Tibial artery (tissue), 4 donors: ENCODE measurements at regions of chr6 and their contacts with region 1.

Region 1: GRCh38 chr6:145734486-145735355 is 599 bp downstream of the EPM2A start:
- DNase-seq: peak; percentile 87 to 93
- H3K4me3 ChIP-seq: peak overlapping the region; percentile 73 to 77
- H3K27ac ChIP-seq: peak overlapping the region; percentile 98
- H3K4me1 ChIP-seq: peaks cover 0 to 51% (median 5%) of the 10 kb centered on the region in 4 donors
- H3K27me3 ChIP-seq: no peaks in the 10 kb centered on the region
- CTCF ChIP-seq: no peak

Region 2: GRCh38 chr6:145241039-145241438 is 493.7 kb before region 1 on chr6:
- intact Hi-C with region 1: no loop called
- DNase-seq: no peak
- H3K4me3 ChIP-seq: no peak overlapping the region
- H3K27ac ChIP-seq: no peak overlapping the region
- H3K4me1 ChIP-seq: no peaks in the 10 kb centered on the region
- H3K27me3 ChIP-seq: no peaks in the 10 kb centered on the region
- CTCF ChIP-seq: no peak

Region 3: GRCh38 chr6:145360859-145361258 is 373.9 kb before region 1 on chr6:
- intact Hi-C with region 1: no loop called
- DNase-seq: no peak
- H3K4me3 ChIP-seq: no peak overlapping the region
- H3K27ac ChIP-seq: no peak overlapping the region
- H3K4me1 ChIP-seq: no peaks in the 10 kb centered on the region
- H3K27me3 ChIP-seq: no peaks in the 10 kb centered on the region
- CTCF ChIP-seq: no peak

Region 4: GRCh38 chr6:145602726-145603326 is 131.9 kb before region 1 on chr6:
- intact Hi-C with region 1: no loop called
- DNase-seq: no peak
- H3K4me3 ChIP-seq: no peak overlapping the region
- H3K27ac ChIP-seq: no peak overlapping the region
- H3K4me1 ChIP-seq: peaks cover 0 to 7% (median 0%) of the 10 kb centered on the region in 4 donors
- H3K27me3 ChIP-seq: no peaks in the 10 kb centered on the region
- CTCF ChIP-seq: no peak

Region 5: GRCh38 chr6:145756146-145756662 is 21.5 kb after region 1 on chr6:
- intact Hi-C with region 1: no loop called
- DNase-seq: peak; percentile 37 to 70
- H3K4me3 ChIP-seq: no peak overlapping the region
- H3K27ac ChIP-seq: no peak overlapping the region
- H3K4me1 ChIP-seq: peaks cover 0 to 7% (median 0%) of the 10 kb centered on the region in 4 donors
- H3K27me3 ChIP-seq: no peaks in the 10 kb centered on the region
- CTCF ChIP-seq: no peak

Region 6: DNA sequence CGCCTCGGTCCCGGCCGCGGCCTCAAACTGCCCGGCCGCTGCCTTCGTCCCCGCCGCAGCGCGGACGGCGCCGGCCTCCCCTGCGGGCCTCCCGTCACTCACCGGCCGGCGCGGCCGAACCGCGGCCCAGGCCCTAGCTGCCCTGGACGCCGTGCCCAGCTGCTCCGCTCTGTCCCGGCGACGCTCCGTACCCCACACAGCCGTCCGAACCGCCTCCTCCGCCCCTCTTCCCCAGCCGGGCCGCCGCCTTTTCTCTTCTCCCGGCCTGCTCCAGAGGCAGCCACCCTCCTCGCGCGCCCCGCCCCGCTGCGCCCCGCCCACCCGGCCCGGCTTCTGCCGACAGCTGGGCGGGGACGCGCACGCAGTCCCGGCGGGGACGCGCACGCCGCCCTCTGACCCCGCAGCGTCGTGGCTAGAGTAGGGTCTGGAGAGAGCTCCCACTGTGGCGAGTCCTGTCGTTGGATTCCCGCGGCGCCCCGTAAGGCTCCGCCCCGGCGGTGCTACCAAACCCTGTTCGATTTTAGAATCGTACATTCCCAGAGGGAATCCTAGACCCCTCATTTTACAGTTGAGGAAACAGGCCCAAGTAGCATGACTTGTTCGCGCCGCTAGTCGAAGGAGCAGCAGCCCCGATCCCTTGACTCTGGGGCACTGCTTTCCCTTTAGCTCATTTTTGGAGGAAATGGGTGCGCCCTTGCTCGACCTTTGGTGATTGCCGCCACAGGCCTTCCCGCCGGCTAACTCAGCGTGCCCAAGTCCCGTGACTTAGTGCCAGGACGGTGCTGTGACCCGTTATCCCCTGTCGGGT is 80.0 kb after region 1 on chr6 and contains the start of gene FBXO30:
- intact Hi-C with region 1: loop called (anchors 2 kb)
- DNase-seq: peak; percentile 84 to 93
- H3K4me3 ChIP-seq: peak within 1 kb of the TSS; percentile 72 to 73
- H3K27ac ChIP-seq: peak within 1 kb of the TSS; percentile 94 to 96
- H3K4me1 ChIP-seq: peaks cover 0 to 46% (median 21%) of the 10 kb centered on the region in 4 donors
- H3K27me3 ChIP-seq: no peaks in the 10 kb centered on the region
- CTCF ChIP-seq: peak; percentile 20 to 58

Region 7: GRCh38 chr6:145963216-145964068 is 228.7 kb after region 1 on chr6:
- intact Hi-C with region 1: loop called (anchors 10 kb)
- DNase-seq: peak; percentile 37 to 76
- H3K4me3 ChIP-seq: peak overlapping the region; percentile 81 to 92
- H3K27ac ChIP-seq: peak overlapping the region; percentile 87 to 94
- H3K4me1 ChIP-seq: peaks cover 0 to 38% (median 24%) of the 10 kb centered on the region in 4 donors
- H3K27me3 ChIP-seq: no peaks in the 10 kb centered on the region
- CTCF ChIP-seq: no peak

Region 8: DNA sequence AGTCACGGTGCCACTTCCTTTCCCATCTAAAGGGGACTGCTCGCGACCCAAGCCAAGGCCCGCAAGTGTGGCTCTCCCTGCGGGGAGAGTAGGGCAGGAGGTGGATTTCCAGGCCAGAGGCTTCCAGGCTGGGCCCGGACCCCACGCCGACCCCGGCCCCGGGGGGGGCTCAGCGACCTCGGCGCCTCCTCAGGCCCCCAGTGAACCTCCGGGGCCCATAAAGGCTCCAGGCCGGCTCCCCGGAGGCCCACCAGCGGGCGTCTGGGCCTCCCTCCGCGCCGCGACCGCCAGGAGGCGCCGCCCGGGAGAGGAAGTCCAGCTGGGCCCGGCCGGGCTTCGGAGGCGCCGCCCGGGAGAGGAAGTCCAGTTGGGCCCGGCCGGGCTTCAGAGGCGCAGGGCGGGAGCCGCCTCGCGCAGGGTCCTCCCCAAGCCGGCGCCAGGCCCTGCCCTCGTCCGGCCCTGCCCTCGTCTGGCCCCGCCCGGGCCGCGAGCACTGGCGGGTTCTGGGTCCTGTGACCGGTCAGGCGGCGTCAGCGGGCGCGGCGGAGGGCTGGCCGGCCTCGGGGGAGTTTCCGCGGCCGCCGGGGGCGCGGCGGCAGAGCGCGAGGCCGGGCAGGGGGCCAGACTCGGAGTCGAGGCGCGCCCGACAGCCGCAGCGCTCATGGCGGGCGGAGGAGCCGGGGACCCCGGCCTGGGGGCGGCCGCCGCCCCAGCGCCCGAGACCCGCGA is 808.7 kb after region 1 on chr6 and contains the start of gene RAB32:
- intact Hi-C with region 1: loop called (anchors 10 kb)
- DNase-seq: peak; percentile 94 to 98
- H3K4me3 ChIP-seq: peak within 1 kb of the TSS; percentile 79 to 83
- H3K27ac ChIP-seq: peak within 1 kb of the TSS; percentile 98 to 99
- H3K4me1 ChIP-seq: peaks cover 0 to 39% (median 21%) of the 10 kb centered on the region in 4 donors
- H3K27me3 ChIP-seq: no peaks in the 10 kb centered on the region
- CTCF ChIP-seq: peak; percentile 66 to 69